ENCODE measurements at regions of chr13 and their contacts with region 1.

Region 1: DNA sequence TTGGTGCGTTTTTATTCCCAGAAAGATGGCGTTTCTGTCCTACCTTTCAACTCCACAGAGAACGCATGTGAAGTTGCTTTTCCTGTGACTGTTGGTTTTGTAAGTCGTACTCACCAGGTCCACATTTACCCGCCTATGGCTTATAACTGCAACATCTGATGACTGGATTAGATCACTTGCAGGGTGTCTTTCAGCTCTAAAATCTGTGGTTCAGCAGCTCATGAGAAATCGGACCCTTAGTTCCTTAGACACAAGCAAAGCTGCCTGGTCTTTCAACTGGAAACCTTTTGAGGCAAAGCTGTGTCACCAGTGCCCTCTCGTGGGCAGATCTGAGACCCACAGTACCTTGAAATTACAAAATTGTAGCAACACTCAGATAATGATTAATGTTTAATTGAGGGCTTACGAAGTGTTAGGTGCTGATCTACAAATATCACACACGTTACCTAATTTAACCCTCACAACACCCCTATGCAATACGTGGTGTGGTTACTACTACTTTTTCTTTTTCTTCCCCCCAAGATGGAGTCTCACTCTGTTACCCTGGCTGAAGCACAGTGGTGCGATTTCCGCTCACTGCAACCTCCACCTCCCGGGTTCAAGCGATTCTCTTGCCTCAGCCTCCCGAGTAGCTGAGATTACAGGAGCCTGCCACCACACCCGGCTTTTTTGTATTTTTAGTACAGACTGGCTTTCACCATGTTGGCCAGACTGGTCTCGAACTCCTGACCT is 65.4 kb downstream of the RUBCNL start:
- DNase-seq: peak; percentile 56 to 61
- H3K4me3 ChIP-seq: no peak overlapping the region
- H3K4me3 Mint-ChIP-seq: no peak overlapping the region
- H3K27ac Mint-ChIP-seq: no peak overlapping the region
- H3K4me1 ChIP-seq: no peaks in the 10 kb centered on the region
- H3K4me1 Mint-ChIP-seq: no peaks in the 10 kb centered on the region
- H3K27me3 ChIP-seq: no peaks in the 10 kb centered on the region
- H3K27me3 Mint-ChIP-seq: no peaks in the 10 kb centered on the region
- CTCF ChIP-seq: peak; percentile 83 to 87

Region 2: DNA sequence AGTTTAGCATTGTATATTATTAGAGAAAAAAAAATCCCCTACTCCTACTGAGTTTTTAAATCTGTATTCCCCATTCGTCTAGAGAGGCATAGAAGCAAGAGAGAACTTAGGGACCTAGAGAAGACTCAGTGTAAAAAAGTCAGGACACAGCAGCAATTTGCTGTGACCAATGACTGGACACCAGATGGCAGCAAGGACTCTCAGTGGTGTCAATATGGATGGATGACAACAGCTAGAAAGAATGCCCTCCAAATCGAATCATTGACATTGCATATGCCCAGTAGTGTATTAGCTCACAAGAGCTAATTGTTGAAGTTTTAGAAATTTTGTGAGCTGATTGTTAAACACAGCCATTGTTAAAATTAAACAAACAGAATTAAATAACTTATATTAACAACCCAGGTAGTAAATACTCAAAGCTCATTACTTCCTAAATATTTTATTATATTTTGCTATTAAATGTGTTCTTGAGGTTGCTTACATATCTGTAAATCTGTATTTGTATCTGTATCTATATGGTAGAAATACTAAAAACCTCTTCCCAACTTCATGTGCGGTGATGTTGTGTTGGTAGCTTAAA is 514.0 kb before region 1 on chr13:
- CTCF ChIA-PET with region 1: interaction called, 5 read pairs
- POLR2A ChIA-PET with region 1: no interaction called
- intact Hi-C with region 1: loop called (anchors 10 kb)
- DNase-seq: peak; percentile 61 to 63
- H3K4me3 ChIP-seq: no peak overlapping the region
- H3K4me3 Mint-ChIP-seq: no peak overlapping the region
- H3K27ac Mint-ChIP-seq: no peak overlapping the region
- H3K4me1 ChIP-seq: no peaks in the 10 kb centered on the region
- H3K4me1 Mint-ChIP-seq: no peaks in the 10 kb centered on the region
- H3K27me3 ChIP-seq: peaks cover 1% of the 10 kb centered on the region; the same call in 1 of the 2 replicates
- H3K27me3 Mint-ChIP-seq: peaks cover 9% of the 10 kb centered on the region
- CTCF ChIP-seq: peak; percentile 60 to 82

Region 3: DNA sequence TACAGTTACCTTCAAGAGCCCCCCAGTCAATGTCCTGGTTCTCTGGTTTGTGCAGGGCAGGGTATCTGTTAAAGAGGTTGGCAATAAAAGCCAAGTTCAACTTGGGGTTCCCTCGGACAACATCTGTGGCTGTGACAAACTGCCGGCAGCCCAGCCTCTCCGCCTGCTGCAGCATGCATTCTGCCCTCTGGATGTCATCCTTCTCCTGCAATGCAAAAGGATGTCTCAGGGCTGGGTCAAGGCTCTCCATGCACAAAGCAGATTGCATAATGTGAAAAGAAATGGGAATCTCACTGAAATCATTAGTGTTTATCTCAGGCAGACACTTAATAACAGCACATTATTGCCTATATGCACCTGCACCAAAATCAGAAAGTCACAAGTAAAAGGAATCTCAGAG is 174.8 kb before region 1 on chr13:
- CTCF ChIA-PET with region 1: interaction called, 5 read pairs
- POLR2A ChIA-PET with region 1: no interaction called
- intact Hi-C with region 1: loop called (anchors 1 kb)
- DNase-seq: peak; percentile 58 to 63
- H3K4me3 ChIP-seq: no peak overlapping the region
- H3K4me3 Mint-ChIP-seq: no peak overlapping the region
- H3K27ac Mint-ChIP-seq: no peak overlapping the region
- H3K4me1 ChIP-seq: peaks cover 32% of the 10 kb centered on the region
- H3K4me1 Mint-ChIP-seq: peaks cover 29% of the 10 kb centered on the region
- H3K27me3 ChIP-seq: no peaks in the 10 kb centered on the region
- H3K27me3 Mint-ChIP-seq: no peaks in the 10 kb centered on the region
- CTCF ChIP-seq: peak; percentile 54 to 59

Region 4: DNA sequence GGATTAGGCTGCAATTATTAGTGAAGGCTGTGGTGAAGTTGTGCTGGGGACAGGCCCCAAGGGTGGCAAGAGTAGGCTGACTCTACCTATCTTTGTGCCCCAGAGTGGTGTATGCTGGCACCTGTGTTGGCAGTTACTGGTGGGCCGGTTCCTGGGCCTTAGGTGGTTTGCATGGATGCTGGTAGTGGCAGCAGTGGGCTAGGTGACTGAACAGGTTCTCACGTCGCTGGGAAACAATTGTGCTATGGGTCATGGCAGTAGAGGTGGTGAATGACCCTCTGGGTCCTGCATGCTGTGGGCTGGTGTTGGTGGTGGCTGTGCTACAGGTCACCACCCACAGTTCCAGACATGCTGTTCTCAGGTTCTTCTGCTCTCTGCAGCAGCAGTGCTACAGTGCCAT is 96.8 kb before region 1 on chr13:
- CTCF ChIA-PET with region 1: no interaction called
- POLR2A ChIA-PET with region 1: no interaction called
- intact Hi-C with region 1: no loop called
- DNase-seq: no peak
- H3K4me3 ChIP-seq: no peak overlapping the region
- H3K4me3 Mint-ChIP-seq: no peak overlapping the region
- H3K27ac Mint-ChIP-seq: no peak overlapping the region
- H3K4me1 ChIP-seq: peaks cover 10% of the 10 kb centered on the region; the same call in 1 of the 2 replicates
- H3K4me1 Mint-ChIP-seq: no peaks in the 10 kb centered on the region
- H3K27me3 ChIP-seq: no peaks in the 10 kb centered on the region
- H3K27me3 Mint-ChIP-seq: peaks cover 4% of the 10 kb centered on the region
- CTCF ChIP-seq: no peak

Region 5: DNA sequence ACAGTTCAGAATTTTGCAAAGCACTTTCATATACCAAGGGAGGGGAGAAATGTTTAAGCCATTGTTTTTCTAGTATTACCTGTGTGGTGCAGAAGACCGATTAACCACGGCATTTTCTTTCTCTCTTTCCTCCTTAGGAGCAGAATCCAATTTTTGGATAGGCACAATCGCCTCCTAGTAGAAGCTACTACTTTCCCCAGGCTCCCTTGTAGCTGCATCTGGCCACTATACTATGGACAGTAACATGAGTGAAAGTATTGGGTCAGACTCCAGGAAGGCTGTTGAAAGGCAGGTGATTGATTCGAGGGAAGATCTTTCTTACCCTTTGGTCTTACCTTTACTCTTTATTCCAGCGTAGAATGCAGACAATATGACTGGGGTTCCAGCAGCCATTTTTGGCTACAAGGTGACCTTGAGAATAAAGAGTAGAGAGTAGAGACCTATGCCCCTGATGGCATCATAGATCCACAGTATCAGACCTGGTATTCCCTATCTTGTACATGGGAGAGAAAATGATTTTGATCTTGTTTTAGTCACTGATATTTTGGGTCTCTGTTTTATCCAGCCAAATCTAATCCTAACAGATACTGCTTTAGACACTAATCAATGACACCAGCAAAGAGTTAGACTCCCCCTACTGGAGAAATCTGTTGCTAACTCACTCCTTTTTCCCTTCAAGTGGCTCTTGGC is 32.9 kb before region 1 on chr13:
- CTCF ChIA-PET with region 1: interaction called, 3 read pairs
- POLR2A ChIA-PET with region 1: no interaction called
- intact Hi-C with region 1: loop called (anchors 2 kb)
- DNase-seq: peak in 1 of 2 experiments; percentile 61
- H3K4me3 ChIP-seq: no peak overlapping the region
- H3K4me3 Mint-ChIP-seq: no peak overlapping the region
- H3K27ac Mint-ChIP-seq: no peak overlapping the region
- H3K4me1 ChIP-seq: no peaks in the 10 kb centered on the region; the same call in 1 of the 2 replicates
- H3K4me1 Mint-ChIP-seq: no peaks in the 10 kb centered on the region
- H3K27me3 ChIP-seq: no peaks in the 10 kb centered on the region
- H3K27me3 Mint-ChIP-seq: no peaks in the 10 kb centered on the region
- CTCF ChIP-seq: peak; percentile 72 to 87

Region 6: GRCh38 chr13:46303742-46304385 is 17.8 kb before region 1 on chr13:
- CTCF ChIA-PET with region 1: no interaction called
- POLR2A ChIA-PET with region 1: no interaction called
- intact Hi-C with region 1: no loop called
- DNase-seq: no peak
- H3K4me3 ChIP-seq: no peak overlapping the region
- H3K4me3 Mint-ChIP-seq: no peak overlapping the region
- H3K27ac Mint-ChIP-seq: no peak overlapping the region
- H3K4me1 ChIP-seq: no peaks in the 10 kb centered on the region
- H3K4me1 Mint-ChIP-seq: no peaks in the 10 kb centered on the region
- H3K27me3 ChIP-seq: no peaks in the 10 kb centered on the region
- H3K27me3 Mint-ChIP-seq: peaks cover 2% of the 10 kb centered on the region
- CTCF ChIP-seq: no peak

Region 7: DNA sequence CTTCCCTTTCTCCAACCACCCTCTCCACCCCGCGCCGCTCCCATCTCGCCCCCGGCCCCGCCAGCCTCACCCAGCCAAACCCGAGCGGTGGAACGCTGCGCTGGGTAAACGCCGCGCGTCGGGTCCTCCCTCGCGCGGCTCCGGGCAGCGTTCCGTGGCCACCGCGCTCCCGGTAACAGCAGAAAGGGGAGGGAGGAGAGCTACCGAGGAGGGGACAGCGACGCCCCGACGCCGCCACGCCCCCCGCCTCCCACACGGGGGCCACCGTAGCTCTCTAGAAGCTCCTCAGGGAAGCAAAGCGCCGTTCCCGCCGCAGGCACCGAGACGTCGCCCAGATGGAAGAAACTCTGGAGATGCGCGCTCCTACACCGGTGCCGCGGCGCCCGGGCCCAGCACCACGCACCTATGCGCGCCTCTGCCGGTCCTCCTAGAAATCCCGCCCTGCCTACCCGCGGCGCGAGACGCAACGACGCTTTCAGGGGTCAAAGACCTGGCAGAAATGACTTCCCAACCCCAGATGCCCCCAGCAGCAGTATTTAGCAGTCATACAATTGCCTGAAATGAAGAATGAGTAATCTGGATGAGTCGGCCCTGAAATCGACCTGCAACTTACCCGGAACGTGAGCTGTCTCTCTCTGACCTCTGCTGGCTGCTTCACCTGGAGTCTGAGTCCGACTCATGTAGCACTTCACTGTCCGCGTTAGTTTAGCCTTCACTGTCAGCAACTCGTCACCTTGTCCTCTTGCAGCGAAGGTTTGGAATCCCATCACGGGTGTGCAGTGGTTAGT is 65.6 kb after region 1 on chr13 and contains the start of gene RUBCNL:
- CTCF ChIA-PET with region 1: interaction called, 4 read pairs
- POLR2A ChIA-PET with region 1: no interaction called
- intact Hi-C with region 1: loop called (anchors 2 kb)
- DNase-seq: peak; percentile 79 to 80
- H3K4me3 ChIP-seq: peak within 1 kb of the TSS; percentile 53
- H3K4me3 Mint-ChIP-seq: peak within 1 kb of the TSS; percentile 85
- H3K27ac Mint-ChIP-seq: peak within 1 kb of the TSS; percentile 68
- H3K4me1 ChIP-seq: peaks cover 28% of the 10 kb centered on the region
- H3K4me1 Mint-ChIP-seq: peaks cover 29% of the 10 kb centered on the region
- H3K27me3 ChIP-seq: no peaks in the 10 kb centered on the region
- H3K27me3 Mint-ChIP-seq: no peaks in the 10 kb centered on the region
- CTCF ChIP-seq: peak in 1 of 2 experiments; percentile 10
- total RNA-seq, gene RUBCNL: 14.0 and 16.0 TPM in 2 replicates

Region 8: DNA sequence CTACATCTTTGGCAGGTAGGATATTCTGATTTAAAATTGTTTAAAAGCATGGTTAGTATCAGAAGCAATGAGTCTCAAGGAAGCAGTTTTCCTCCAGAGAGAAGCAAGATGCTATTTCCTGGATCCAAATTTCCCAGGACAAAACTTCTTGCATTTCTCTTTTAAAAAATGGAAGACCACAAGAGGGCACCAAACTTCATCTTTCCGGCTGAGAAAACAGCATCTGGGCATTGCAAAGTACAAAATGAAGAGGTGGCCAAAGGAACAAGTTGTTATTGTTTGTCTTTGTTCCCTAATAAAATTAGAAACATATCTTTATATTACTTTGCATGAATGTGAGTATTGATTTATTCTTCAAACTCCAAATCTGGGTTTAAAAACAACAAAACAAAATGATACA is 171.3 kb after region 1 on chr13:
- CTCF ChIA-PET with region 1: no interaction called
- POLR2A ChIA-PET with region 1: no interaction called
- intact Hi-C with region 1: no loop called
- DNase-seq: peak in 1 of 2 experiments; percentile 72
- H3K4me3 ChIP-seq: no peak overlapping the region
- H3K4me3 Mint-ChIP-seq: no peak overlapping the region
- H3K27ac Mint-ChIP-seq: no peak overlapping the region
- H3K4me1 ChIP-seq: peaks cover 32% of the 10 kb centered on the region
- H3K4me1 Mint-ChIP-seq: peaks cover 36% of the 10 kb centered on the region
- H3K27me3 ChIP-seq: no peaks in the 10 kb centered on the region
- H3K27me3 Mint-ChIP-seq: no peaks in the 10 kb centered on the region
- CTCF ChIP-seq: peak; percentile 63 to 65

Measured in Caco-2 (cell line).